Activated CD8-positive, alpha-beta memory T cell treated with anti-CD3 and anti-CD28 coated beads, Interleukin-2, amount 10 ng/mL, durations not matched to agents 7 days and 5 days (primary cell): ENCODE measurements at regions of chr1 and their contacts with region 1.

Region 1: GRCh38 chr1:206734499-206735142 is 36.0 kb upstream of the IL19 start:
- DNase-seq: peak; percentile 83
- ATAC-seq: peak; percentile 31
- H3K4me3 Mint-ChIP-seq: no peak overlapping the region
- H3K27ac Mint-ChIP-seq: peak overlapping the region; percentile 21
- H3K4me1 Mint-ChIP-seq: peaks cover 70% of the 10 kb centered on the region
- H3K27me3 Mint-ChIP-seq: no peaks in the 10 kb centered on the region

Region 2: DNA sequence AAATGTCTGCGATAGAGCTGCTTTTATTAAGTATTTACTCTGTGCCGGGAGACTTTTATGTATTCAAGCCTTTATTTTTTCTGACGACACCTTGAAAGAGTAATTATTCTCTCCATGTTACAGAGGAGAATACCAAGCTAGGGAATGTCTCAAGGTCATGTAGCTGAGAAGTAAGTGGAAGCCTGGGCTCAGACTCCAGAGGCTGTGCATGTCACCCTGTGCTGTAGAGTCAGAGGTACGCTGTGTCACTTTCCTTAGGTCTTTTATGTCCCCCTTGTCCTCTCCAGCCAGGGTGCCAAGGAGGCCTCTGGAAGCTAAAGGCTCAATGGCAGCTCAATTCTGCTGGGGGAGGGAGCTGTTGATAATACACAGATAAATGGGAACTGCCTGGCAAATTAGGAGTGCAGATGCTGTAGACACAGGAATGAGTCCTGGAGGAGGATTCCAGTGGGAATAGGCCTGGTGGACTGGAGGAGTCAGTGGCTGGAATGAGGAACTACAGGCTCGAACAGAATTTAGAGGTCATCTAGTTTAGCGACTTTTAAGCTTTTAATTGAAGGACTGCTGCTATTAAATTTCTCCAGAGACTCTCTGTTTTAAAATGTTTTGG is 26.6 kb after region 1 on chr1:
- CTCF ChIA-PET with region 1: interaction called, 27 read pairs
- DNase-seq: no peak
- ATAC-seq: no peak
- H3K4me3 Mint-ChIP-seq: no peak overlapping the region
- H3K27ac Mint-ChIP-seq: no peak overlapping the region
- H3K4me1 Mint-ChIP-seq: peaks cover 33% of the 10 kb centered on the region
- H3K27me3 Mint-ChIP-seq: peaks cover 34% of the 10 kb centered on the region

Region 3: DNA sequence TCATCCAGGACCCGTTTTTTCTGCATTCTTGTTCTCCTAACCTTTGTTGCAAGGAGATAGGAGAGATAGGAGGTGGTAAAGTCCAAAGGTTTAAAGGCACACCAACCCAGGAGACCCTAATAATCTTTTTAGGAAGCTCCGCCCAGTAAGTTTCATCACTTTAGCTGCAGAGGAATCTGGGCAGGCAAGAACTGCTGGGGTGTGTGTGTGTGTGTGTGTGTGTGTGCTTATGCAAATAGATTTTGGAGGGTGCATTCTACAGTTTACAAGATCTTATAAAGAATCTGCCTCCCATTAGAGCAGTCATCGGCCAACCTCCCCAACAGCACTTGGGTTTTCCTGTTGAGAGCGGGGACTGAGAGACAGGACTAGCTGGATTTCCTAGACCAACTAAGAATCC is 41.6 kb after region 1 on chr1:
- CTCF ChIA-PET with region 1: interaction called, 17 read pairs
- DNase-seq: no peak
- ATAC-seq: no peak
- H3K4me3 Mint-ChIP-seq: no peak overlapping the region
- H3K27ac Mint-ChIP-seq: no peak overlapping the region
- H3K4me1 Mint-ChIP-seq: peaks cover 31% of the 10 kb centered on the region
- H3K27me3 Mint-ChIP-seq: peaks cover 40% of the 10 kb centered on the region

Region 4: DNA sequence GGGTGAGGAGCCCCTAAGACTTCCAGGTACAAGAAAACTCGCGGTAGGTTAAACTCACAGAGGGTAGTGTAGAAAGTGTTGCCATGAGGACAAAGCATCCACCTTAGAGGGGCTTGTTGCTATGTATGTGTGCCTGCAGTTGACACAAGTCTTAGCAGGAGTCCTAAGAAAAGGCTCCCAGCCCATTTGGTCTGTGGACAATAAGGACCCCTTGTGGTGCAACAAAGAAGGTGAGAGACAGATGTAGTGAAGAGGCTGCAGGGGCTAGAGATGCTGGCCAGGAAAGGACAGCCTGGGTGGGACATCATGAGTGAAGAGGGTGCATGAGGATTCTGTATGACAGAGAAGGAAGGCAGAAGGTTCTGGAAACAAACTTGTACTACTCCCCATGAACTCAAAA is 74.0 kb after region 1 on chr1:
- CTCF ChIA-PET with region 1: interaction called, 488 read pairs
- DNase-seq: peak; percentile 72
- ATAC-seq: peak; percentile 89
- H3K4me3 Mint-ChIP-seq: no peak overlapping the region
- H3K27ac Mint-ChIP-seq: peak overlapping the region; percentile 18
- H3K4me1 Mint-ChIP-seq: peaks cover 55% of the 10 kb centered on the region
- H3K27me3 Mint-ChIP-seq: peaks cover 2% of the 10 kb centered on the region

Region 5: GRCh38 chr1:206930210-206930798 is 195.7 kb after region 1 on chr1:
- CTCF ChIA-PET with region 1: interaction called, 10 read pairs
- DNase-seq: peak; percentile 75
- ATAC-seq: peak; percentile 55
- H3K4me3 Mint-ChIP-seq: no peak overlapping the region
- H3K27ac Mint-ChIP-seq: peak overlapping the region; percentile 84
- H3K4me1 Mint-ChIP-seq: peaks cover 22% of the 10 kb centered on the region
- H3K27me3 Mint-ChIP-seq: no peaks in the 10 kb centered on the region